Activated CD8-positive, alpha-beta T cell treated with anti-CD3 and anti-CD28 coated beads for 36 hours (primary cell): ENCODE measurements at regions of chr16 and their contacts with region 1.

Region 1: GRCh38 chr16:4307215-4308037 is 8.4 kb upstream of the GLIS2 start:
- DNase-seq: peak; percentile 97
- ATAC-seq: peak; percentile 94
- H3K4me3 Mint-ChIP-seq: peak overlapping the region; percentile 84
- H3K27ac Mint-ChIP-seq: peak overlapping the region; percentile 96
- H3K4me1 Mint-ChIP-seq: peaks cover 29% of the 10 kb centered on the region
- H3K27me3 Mint-ChIP-seq: no peaks in the 10 kb centered on the region
- CTCF ChIP-seq: no peak

Region 2: DNA sequence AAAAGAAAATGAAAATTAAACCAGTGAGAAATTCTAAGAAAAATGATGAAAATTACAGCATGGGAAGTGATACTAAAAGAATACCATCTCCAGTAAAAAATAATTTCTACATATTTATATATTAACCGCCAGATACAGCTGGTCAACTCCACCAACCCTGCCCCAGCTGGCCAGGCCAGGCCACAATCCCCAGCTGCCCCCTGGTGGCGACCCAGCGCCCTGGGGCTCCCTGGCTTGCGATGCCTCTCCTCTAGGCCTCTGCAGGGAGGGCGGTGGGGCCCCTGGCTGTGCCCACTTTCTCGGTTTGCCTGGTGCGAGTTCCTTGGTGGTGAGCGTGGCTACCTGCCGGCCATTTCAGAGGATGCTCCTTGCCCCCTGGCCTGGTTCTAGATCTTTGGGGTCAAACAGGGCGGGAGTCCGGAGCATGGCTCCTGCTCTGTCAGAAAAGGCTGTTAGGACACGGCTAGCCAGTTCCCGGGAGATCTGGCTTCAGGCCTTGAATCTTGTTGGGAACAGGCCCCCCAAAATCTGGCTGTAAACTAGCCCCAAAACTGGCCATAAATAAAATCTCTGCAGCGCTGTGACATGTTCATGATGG is 22.9 kb after region 1 on chr16:
- CTCF ChIA-PET with region 1: interaction called, 23 read pairs
- POLR2A ChIA-PET with region 1: interaction called, 6 read pairs
- intact Hi-C with region 1: no loop called
- DNase-seq: peak; percentile 83
- ATAC-seq: peak; percentile 80
- H3K4me3 Mint-ChIP-seq: no peak overlapping the region
- H3K27ac Mint-ChIP-seq: no peak overlapping the region
- H3K4me1 Mint-ChIP-seq: peaks cover 4% of the 10 kb centered on the region
- H3K27me3 Mint-ChIP-seq: no peaks in the 10 kb centered on the region
- CTCF ChIP-seq: peak; percentile 97